Heart left ventricle (tissue), 16 donors: ENCODE measurements at regions of chr4 and their contacts with region 1.

Region 1: GRCh38 chr4:37977471-37978247 is 17.5 kb downstream of the PTTG2 start:
- DNase-seq: peak; percentile 78 to 89 (median 85)
- ATAC-seq: peak; percentile 72 to 88 (median 85)
- H3K4me3 ChIP-seq: peak overlapping the region; percentile 82 to 97 (median 92)
- H3K27ac ChIP-seq: peak overlapping the region; percentile 91 to 99 (median 98)
- H3K4me1 ChIP-seq: peaks cover 0 to 60% (median 32%) of the 10 kb centered on the region in 12 donors
- H3K27me3 ChIP-seq: no peaks in the 10 kb centered on the region
- CTCF ChIP-seq: peak; percentile 57 to 88 (median 72)
- POLR2A ChIP-seq: no peak

Region 2: GRCh38 chr4:37802068-37802666 is 175.5 kb before region 1 on chr4:
- intact Hi-C with region 1: loop called in 5 of 10 experiments (anchors 2 to 10 kb)
- DNase-seq: peak in 4 of 5 donors; percentile 36 to 56 (median 42)
- ATAC-seq: peak; percentile 58 to 88 (median 84)
- H3K4me3 ChIP-seq: no peak overlapping the region
- H3K27ac ChIP-seq: no peak overlapping the region
- H3K4me1 ChIP-seq: peaks cover 0 to 4% (median 0%) of the 10 kb centered on the region in 12 donors
- H3K27me3 ChIP-seq: no peaks in the 10 kb centered on the region
- CTCF ChIP-seq: peak; percentile 16 to 74 (median 53)
- POLR2A ChIP-seq: no peak

Region 3: DNA sequence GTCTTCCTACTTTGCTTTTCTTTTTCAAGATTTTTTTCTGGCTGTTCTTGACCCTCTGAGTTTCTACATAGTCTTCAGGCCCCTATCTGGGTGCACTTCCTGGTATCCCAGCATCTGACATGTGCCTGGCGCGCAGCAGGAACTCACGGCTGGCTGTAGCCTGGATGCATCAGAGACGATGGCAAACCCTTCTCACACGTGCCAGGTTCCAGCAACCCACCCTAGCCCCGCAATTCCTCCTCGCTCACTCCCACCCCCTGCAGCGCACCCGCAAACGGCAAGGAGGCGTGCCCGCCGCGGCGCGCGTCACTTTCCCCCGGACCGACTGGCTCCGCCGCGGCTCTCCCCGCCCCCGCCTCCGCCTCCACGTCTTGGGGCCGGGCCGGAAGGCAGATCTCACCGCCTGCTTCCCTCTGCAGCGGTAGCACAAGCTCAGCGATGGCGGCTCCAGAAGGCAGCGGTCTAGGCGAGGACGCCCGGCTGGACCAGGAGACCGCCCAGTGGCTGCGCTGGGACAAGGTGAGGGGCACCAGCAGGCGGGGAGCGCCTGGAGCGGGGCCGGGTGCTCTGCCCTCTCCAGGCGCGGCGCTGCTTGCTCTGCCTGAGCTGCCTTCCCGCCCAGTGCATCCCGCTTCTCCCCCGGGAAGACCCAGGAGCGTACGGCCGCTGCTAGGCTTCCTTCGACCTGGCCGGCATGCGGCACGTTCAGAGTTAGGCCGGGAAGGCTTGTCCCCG is 151.2 kb before region 1 on chr4 and contains the start of gene PGM2:
- intact Hi-C with region 1: loop called in 7 of 10 experiments (anchors 1 to 10 kb)
- DNase-seq: peak; percentile 92 to 95 (median 93)
- ATAC-seq: peak; percentile 86 to 97 (median 96)
- H3K4me3 ChIP-seq: peak within 1 kb of the TSS; percentile 54 to 97 (median 88)
- H3K27ac ChIP-seq: peak within 1 kb of the TSS; percentile 55 to 95 (median 90)
- H3K4me1 ChIP-seq: peaks cover 3 to 43% (median 20%) of the 10 kb centered on the region in 12 donors
- H3K27me3 ChIP-seq: no peaks in the 10 kb centered on the region
- CTCF ChIP-seq: peak in 4 of 12 donors; percentile 6 to 31 (median 24)
- POLR2A ChIP-seq: peak in 1 of 2 donors; percentile 89
- total RNA-seq, gene PGM2: 6.8 to 18.4 (median 8.7) TPM

Region 4: DNA sequence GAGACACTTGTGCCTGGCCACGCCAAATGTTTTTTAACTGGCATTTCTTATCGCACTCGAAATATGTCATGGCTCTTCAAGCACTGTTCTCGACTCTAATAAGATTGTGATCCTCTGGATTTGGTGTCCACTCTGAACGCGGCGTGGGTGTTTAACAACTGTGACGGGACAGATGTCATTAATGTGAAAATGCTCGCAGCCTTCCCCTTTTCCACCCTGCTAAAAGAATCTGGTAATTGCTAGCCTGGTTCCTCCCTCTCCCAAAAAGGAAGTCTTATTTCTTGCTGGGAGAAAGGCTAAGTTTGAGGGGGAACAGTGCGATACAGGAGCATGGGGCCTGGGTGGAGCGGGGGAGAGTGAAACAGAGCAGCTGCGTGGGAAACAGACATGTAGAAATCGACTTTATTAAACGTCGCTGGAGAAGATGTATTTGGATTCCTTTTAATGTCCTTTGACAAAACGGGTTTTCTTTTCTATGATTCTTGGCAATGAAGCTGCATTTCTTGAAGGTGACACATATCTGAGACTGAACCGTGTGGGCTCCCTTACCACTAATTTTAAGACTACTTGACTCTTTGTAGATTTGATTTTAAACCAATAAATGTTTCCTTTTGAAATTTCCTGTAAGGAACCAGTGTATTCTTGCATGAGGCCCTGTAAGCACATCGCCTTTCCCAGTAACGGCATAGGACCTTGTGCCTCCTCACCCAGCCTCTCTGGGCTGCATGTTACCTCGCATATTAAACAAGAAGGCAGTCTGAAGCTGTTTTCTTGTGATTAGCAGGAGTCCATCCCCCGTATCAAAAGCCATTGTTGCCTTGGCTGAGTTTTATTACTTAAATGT is 68.9 kb before region 1 on chr4:
- intact Hi-C with region 1: loop called in 2 of 10 experiments (anchors 5 kb)
- DNase-seq: peak in 2 of 5 donors; percentile 27 to 50
- ATAC-seq: peak; percentile 43 to 74 (median 68)
- H3K4me3 ChIP-seq: peak overlapping the region in 9 of 12 donors; percentile 12 to 44 (median 27)
- H3K27ac ChIP-seq: peak overlapping the region; percentile 73 to 90 (median 80)
- H3K4me1 ChIP-seq: peaks cover 0 to 50% (median 25%) of the 10 kb centered on the region in 12 donors
- H3K27me3 ChIP-seq: no peaks in the 10 kb centered on the region
- CTCF ChIP-seq: no peak
- POLR2A ChIP-seq: no peak

Region 5: DNA sequence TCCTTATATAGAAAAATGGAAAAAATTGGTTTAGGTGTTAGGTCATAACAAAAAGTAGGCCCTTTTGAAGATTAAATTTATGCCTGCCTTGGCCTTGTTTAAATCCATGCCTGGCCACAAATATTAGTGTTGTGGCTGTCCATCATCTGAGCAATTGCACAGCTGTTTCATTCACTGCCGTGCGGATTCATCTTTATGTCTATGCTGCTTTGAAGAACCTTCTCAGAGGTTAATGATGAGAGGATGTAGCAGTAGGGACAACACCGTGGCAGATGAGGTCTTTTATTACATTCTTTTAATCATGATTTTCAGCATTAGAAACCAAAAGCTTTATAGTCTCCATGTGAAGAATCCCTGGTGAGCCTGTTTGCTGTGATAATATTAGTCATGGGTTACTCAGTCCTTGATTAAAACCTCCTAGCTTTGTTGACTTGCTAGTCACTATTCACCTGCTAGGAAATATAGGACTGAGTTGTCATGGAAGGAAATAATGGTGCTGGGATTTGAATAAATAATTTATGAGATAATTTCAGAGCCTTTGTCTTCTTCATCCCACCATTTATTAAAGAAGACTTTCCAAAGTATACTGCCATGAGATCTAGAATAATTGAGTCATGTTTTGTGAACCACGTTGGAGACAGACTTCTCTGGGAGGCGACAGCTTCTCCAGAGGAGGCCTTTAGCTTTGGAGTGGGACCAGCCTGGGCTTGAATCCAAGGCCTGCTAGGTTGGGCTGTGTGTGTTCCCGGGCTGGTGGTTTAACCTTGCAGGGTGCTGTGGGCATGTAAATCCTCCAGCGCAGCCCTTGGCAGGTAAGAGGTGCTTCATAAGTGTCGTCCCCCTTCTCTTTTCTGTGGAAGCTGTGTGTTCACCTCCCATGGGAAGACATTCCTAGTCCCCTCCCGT is 36.1 kb after region 1 on chr4:
- intact Hi-C with region 1: no loop called
- DNase-seq: peak; percentile 59 to 86 (median 77)
- ATAC-seq: peak; percentile 83 to 90 (median 87)
- H3K4me3 ChIP-seq: no peak overlapping the region
- H3K27ac ChIP-seq: peak overlapping the region in 5 of 12 donors; percentile 8 to 78 (median 39)
- H3K4me1 ChIP-seq: peaks cover 0 to 71% (median 27%) of the 10 kb centered on the region in 12 donors
- H3K27me3 ChIP-seq: no peaks in the 10 kb centered on the region
- CTCF ChIP-seq: no peak
- POLR2A ChIP-seq: no peak

Region 6: GRCh38 chr4:38034986-38035882 is 57.6 kb after region 1 on chr4:
- intact Hi-C with region 1: loop called in 9 of 10 experiments (anchors 2 to 10 kb)
- DNase-seq: peak in 1 of 5 donors; percentile 36
- ATAC-seq: peak in 3 of 4 donors; percentile 60 to 65 (median 65)
- H3K4me3 ChIP-seq: no peak overlapping the region
- H3K27ac ChIP-seq: peak overlapping the region in 1 of 12 donors; percentile 56
- H3K4me1 ChIP-seq: peaks cover 0 to 12% (median 1%) of the 10 kb centered on the region in 12 donors
- H3K27me3 ChIP-seq: no peaks in the 10 kb centered on the region
- CTCF ChIP-seq: peak; percentile 48 to 83 (median 70)
- POLR2A ChIP-seq: no peak